Activated CD8-positive, alpha-beta T cell treated with anti-CD3 and anti-CD28 coated beads for 36 hours (primary cell): ENCODE measurements at regions of chr13 and their contacts with region 1.

Region 1: GRCh38 chr13:33817901-33818706 is at the start of gene RFC3:
- DNase-seq: peak; percentile 97
- ATAC-seq: peak; percentile 96
- H3K4me3 Mint-ChIP-seq: peak within 1 kb of the TSS; percentile 88
- H3K27ac Mint-ChIP-seq: peak within 1 kb of the TSS; percentile 97
- H3K4me1 Mint-ChIP-seq: peaks cover 28% of the 10 kb centered on the region
- H3K27me3 Mint-ChIP-seq: peaks cover 1% of the 10 kb centered on the region
- CTCF ChIP-seq: no peak
- total RNA-seq, gene RFC3: 60.0 to 63.0 TPM

Region 2: GRCh38 chr13:33554919-33555791 is 262.9 kb before region 1 on chr13:
- CTCF ChIA-PET with region 1: no interaction called
- POLR2A ChIA-PET with region 1: no interaction called
- intact Hi-C with region 1: loop called (anchors 10 kb)
- DNase-seq: no peak
- ATAC-seq: peak; percentile 42
- H3K4me3 Mint-ChIP-seq: no peak overlapping the region
- H3K27ac Mint-ChIP-seq: no peak overlapping the region
- H3K4me1 Mint-ChIP-seq: peaks cover 6% of the 10 kb centered on the region
- H3K27me3 Mint-ChIP-seq: peaks cover 5% of the 10 kb centered on the region
- CTCF ChIP-seq: no peak

Region 3: DNA sequence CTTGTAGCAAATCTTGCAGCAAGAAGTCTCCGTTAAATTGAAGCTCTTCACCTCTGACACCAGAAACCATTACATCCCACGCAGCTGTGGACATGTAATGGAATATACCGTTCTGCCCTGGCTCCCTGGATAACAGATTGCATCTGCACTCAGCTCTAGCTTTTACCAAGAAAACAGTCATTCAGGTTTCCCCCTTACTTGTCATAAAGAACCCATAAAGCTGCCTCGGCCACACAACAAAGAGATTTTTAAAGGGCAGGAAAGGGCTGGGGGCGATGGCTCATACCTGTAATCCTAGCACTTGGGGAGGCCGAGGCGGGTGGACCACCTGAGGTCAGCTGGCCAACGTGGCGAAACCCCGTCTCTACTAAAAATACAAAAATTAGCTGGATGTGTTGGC is 127.8 kb before region 1 on chr13:
- CTCF ChIA-PET with region 1: no interaction called
- POLR2A ChIA-PET with region 1: no interaction called
- intact Hi-C with region 1: no loop called
- DNase-seq: peak; percentile 25
- ATAC-seq: peak; percentile 20
- H3K4me3 Mint-ChIP-seq: no peak overlapping the region
- H3K27ac Mint-ChIP-seq: no peak overlapping the region
- H3K4me1 Mint-ChIP-seq: no peaks in the 10 kb centered on the region
- H3K27me3 Mint-ChIP-seq: no peaks in the 10 kb centered on the region
- CTCF ChIP-seq: no peak

Region 4: DNA sequence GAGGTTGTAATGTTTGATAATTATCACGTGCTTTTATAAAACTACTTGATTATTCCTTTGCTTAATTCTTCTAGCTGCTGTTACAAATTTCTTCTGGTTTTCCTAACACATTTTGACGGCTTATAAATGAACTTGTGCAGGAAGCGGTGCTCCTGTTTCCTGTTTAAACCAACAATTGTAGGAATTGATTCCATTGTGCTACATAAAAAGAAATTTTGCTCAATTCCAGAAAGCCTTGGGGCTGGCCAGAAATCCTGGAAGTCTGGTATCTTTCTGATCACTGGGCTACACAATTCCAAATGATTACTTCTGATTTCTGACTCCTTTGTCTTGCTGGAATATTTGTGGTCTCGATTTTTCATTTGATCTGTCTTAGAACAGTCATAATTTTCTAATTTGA is 14.8 kb after region 1 on chr13:
- CTCF ChIA-PET with region 1: interaction called, 3 read pairs
- POLR2A ChIA-PET with region 1: interaction called, 11 read pairs
- intact Hi-C with region 1: no loop called
- DNase-seq: no peak
- ATAC-seq: no peak
- H3K4me3 Mint-ChIP-seq: no peak overlapping the region
- H3K27ac Mint-ChIP-seq: no peak overlapping the region
- H3K4me1 Mint-ChIP-seq: peaks cover 2% of the 10 kb centered on the region
- H3K27me3 Mint-ChIP-seq: no peaks in the 10 kb centered on the region
- CTCF ChIP-seq: no peak